ENCODE measurements at regions of chr22 and their contacts with region 1.

Region 1: GRCh38 chr22:24423519-24424000 is 3.8 kb upstream of the ADORA2A start:
- DNase-seq: peak; percentile 50 to 58
- H3K4me3 ChIP-seq: peak overlapping the region in 2 of 3 donors; percentile 11 to 49
- H3K27ac ChIP-seq: peak overlapping the region in 1 of 3 donors; percentile 58
- H3K4me1 ChIP-seq: peaks cover 7 to 33% of the 10 kb centered on the region in 2 donors
- H3K27me3 ChIP-seq: no peaks in the 10 kb centered on the region
- CTCF ChIP-seq: peak in 5 of 6 experiments; percentile 80 to 98 (median 83)
- POLR2A ChIP-seq: no peak

Region 2: DNA sequence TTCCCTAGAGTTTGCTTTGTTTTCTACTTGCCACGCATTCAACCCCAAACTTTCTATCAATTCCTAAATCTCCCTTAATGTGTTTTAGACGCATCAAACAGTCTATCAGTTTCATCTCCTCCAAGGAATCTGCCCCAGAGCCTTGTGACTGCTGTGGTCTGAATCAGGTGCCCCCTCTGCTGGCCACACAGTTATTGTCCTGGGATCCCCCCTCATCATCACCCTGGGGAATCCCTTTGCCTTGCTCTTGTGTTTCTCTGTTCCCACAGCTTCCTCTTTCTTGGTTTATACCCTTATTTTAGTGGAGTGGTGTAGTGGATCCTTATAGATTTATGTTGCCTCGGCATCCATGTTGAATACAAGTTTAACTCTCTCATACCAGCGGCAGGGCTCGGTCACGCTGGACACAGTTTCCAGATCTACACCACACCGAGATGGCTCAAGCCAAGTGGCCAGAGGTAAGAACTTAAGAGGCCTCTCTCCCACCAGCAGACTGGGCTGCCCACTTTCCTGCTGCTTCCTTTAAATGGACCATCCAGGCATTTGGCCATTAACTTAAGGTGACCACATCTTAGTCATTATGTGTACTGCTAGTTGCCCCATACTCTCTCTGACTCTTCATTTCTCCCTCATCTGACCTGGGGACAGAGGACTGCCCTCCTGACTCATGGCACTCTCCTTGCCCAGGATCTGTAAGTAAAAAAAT is 79.7 kb after region 1 on chr22:
- intact Hi-C with region 1: loop called (anchors 2 kb)
- DNase-seq: peak; percentile 50 to 59
- H3K4me3 ChIP-seq: no peak overlapping the region
- H3K27ac ChIP-seq: no peak overlapping the region
- H3K4me1 ChIP-seq: peaks cover 0 to 6% of the 10 kb centered on the region in 2 donors
- H3K27me3 ChIP-seq: no peaks in the 10 kb centered on the region
- CTCF ChIP-seq: peak; percentile 26 to 62 (median 44)
- POLR2A ChIP-seq: no peak

Region 3: GRCh38 chr22:24521791-24522245 is 98.3 kb after region 1 on chr22:
- intact Hi-C with region 1: loop called (anchors 5 kb)
- DNase-seq: peak; percentile 80
- H3K4me3 ChIP-seq: no peak overlapping the region
- H3K27ac ChIP-seq: no peak overlapping the region
- H3K4me1 ChIP-seq: peaks cover 4 to 9% of the 10 kb centered on the region in 2 donors
- H3K27me3 ChIP-seq: no peaks in the 10 kb centered on the region
- CTCF ChIP-seq: peak in 5 of 6 experiments; percentile 15 to 73 (median 56)
- POLR2A ChIP-seq: no peak

Region 4: DNA sequence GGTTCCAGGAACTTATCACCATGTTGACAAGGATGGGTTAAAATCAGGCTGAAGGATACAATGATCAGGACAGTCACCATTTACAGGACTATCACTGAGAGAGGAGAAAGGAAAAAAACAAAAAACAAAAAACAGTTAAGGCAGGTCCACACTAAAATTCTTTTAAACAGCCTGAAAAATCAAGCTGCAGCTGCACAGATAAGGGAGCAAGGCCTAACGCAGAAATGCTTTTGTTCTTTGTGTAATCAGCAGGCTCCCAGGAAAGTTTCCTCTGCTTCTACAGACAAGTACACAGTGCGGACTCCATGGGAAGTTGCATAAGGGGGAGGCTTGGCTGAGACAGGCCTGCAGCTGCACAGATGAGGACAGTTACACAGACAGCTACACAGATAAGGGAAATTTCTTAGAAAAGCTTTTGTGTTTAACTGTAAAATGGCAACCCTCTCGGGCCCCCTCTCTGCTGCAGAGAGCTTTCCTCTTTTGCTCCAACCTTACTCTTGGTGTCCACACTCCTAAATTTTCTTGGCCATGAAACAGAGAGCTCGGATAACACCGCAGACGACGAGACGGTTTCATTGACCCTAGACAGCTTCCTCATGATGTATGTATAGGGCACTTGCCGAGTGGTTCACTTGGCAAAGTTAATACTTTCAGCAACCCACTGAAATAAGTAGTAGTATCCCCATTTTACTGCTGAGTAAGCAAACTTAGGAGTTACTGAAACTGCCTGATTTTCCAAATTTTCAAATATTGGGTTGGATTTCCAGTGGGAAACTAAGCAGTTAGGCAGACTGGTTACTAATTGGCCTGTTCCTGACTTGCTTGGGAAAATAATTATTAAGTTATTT is 305.5 kb after region 1 on chr22:
- intact Hi-C with region 1: no loop called
- DNase-seq: no peak
- H3K4me3 ChIP-seq: no peak overlapping the region
- H3K27ac ChIP-seq: no peak overlapping the region
- H3K4me1 ChIP-seq: peaks cover 0 to 17% of the 10 kb centered on the region in 2 donors
- H3K27me3 ChIP-seq: no peaks in the 10 kb centered on the region
- CTCF ChIP-seq: no peak
- POLR2A ChIP-seq: no peak

Region 5: GRCh38 chr22:24805790-24806662 is 382.5 kb after region 1 on chr22 and contains the start of gene SGSM1:
- intact Hi-C with region 1: no loop called
- DNase-seq: peak; percentile 86 to 89
- H3K4me3 ChIP-seq: peak within 1 kb of the TSS; percentile 53 to 75 (median 63)
- H3K27ac ChIP-seq: peak within 1 kb of the TSS; percentile 66 to 87 (median 84)
- H3K4me1 ChIP-seq: peaks cover 6 to 8% of the 10 kb centered on the region in 2 donors
- H3K27me3 ChIP-seq: no peaks in the 10 kb centered on the region
- CTCF ChIP-seq: no peak
- POLR2A ChIP-seq: peak in 1 of 2 donors; percentile 81
- total RNA-seq, gene SGSM1: 4.2 to 6.7 (median 5.6) TPM

Measured in thyroid gland (tissue), 4 donors.